ENCODE measurements at regions of chr1 and their contacts with region 1.

Region 1: DNA sequence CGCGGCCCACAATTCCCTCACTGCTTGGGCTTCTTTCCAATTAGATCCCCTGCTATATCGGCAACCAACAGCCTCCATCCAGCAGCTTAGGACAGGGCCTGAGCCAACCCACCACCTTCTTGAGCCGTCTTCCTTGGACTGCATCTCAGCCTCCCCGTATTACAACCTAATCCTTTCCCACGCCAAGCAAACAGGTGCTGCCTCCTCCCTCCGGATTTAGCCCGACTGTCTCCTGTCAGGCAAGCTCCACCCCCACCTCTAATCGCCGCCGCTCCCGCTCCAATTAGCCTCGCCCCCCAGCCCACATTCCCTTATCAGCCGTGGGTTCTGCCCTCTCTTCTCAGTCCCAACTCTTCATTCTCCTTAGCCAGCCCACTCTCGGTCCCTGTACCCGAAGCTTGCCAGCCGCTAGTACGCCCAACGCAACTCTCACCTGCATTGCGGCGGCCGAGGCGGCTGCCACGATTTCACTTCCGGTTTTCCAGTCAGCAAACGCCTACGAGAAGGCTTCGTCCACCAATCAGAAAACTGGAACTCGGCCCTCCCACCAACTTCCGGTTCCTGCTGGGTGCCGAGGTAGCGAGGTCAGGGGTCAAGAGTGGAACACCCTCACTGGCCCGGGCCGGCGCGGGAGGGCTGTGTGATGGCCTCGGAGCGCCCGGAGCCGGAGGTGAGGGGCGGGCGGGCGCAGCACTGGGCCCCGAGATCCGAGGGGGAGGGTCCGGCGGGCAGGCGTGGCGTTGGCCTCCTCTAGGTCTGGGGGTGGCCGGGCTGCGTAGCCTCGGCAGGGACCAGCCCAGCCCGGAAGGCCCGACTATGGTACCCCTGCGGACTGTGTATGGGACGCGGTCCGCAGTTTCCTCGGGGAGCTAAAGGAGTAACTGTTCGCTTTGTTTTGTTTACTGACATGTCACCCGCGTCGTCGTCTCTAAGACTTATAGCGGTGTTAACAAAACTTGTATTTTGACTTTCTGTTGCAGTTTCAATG is at the starts of genes MED8 and SZT2:
- DNase-seq: peak; percentile 98 to 99 (median 98)
- ATAC-seq: peak; percentile 98
- H3K4me3 ChIP-seq: peak within 1 kb of the TSS; percentile 61
- H3K27ac ChIP-seq: peak within 1 kb of the TSS; percentile 85
- H3K4me1 ChIP-seq: peaks cover 0 to 13% of the 10 kb centered on the region in 2 experiments; a peak in 2 of 5 replicates
- H3K27me3 ChIP-seq: no peaks in the 10 kb centered on the region
- CTCF ChIP-seq: no peak
- EP300 ChIP-seq: peak; percentile 24
- POLR2A ChIP-seq: peak; percentile 99
- RAD21 ChIP-seq: no peak; a peak in 1 of 4 replicates
- polyA plus RNA-seq, gene MED8: 104 to 120 TPM
- polyA plus RNA-seq, gene SZT2: 0.88 to 1.3 TPM

Region 2: DNA sequence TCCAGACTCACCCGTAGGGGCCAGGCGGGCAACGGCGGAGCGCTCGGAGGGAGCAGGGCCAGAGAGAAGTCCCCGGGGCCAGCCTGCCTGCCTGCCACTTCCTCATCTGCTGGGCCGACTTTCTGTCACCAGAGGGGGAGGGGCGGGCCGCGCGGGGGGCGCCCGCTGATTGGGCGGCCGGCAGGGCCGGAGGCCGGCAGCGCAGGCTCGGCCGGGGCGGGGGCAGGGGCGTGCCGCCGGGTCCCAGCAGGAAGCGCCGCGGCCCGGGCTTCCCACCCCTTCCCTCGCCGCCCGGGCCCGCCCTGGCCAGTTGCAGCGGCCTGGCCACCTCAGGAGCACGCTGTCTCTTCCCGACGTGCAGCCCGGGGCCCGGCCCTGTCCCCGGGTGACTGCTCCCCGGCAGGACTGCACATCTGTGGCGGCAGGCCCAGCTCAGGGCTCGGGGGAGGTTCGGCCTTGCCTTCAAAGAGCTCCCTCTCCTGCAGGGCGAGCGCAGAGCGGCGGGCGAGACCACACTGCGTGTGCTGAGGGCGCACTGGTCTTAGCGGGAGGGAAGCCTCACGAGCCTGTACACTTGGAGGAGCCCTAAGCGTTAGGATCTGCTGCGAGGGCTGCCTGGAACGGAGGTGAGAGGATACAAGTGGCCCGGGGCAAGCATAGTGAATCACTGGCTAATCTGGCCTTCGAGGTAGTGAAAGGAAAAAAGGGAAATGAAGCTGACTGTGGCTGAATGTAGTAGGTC is 21.5 kb before region 1 on chr1 and contains the start of gene ELOVL1:
- CTCF ChIA-PET with region 1: no interaction called
- POLR2A ChIA-PET with region 1: interaction called, 72 read pairs
- in situ Hi-C with region 1: no loop called
- intact Hi-C with region 1: no loop called
- DNase-seq: peak; percentile 97 to 99 (median 98)
- ATAC-seq: peak; percentile 90
- H3K4me3 ChIP-seq: peak within 1 kb of the TSS; percentile 64
- H3K27ac ChIP-seq: peak within 1 kb of the TSS; percentile 89
- H3K4me1 ChIP-seq: peaks cover 35 to 41% of the 10 kb centered on the region in 2 experiments
- H3K27me3 ChIP-seq: no peaks in the 10 kb centered on the region
- CTCF ChIP-seq: peak; percentile 57 to 65 (median 60); a peak in 5 of 6 replicates
- EP300 ChIP-seq: peak; percentile 24; the same call in 1 of the 2 replicates
- POLR2A ChIP-seq: peak; percentile 92
- RAD21 ChIP-seq: peak; percentile 51 to 64
- polyA plus RNA-seq, gene ELOVL1: 70.3 to 147 TPM

Region 3: GRCh38 chr1:43373066-43373940 is 16.3 kb before region 1 on chr1:
- CTCF ChIA-PET with region 1: no interaction called
- POLR2A ChIA-PET with region 1: interaction called, 72 read pairs
- in situ Hi-C with region 1: no loop called
- intact Hi-C with region 1: no loop called
- DNase-seq: no peak
- ATAC-seq: no peak
- H3K4me3 ChIP-seq: no peak overlapping the region
- H3K27ac ChIP-seq: no peak overlapping the region; the same call in 2 of the 3 replicates
- H3K4me1 ChIP-seq: peaks cover 7 to 22% of the 10 kb centered on the region in 2 experiments
- H3K27me3 ChIP-seq: no peaks in the 10 kb centered on the region
- CTCF ChIP-seq: no peak
- EP300 ChIP-seq: no peak
- POLR2A ChIP-seq: no peak
- RAD21 ChIP-seq: no peak

Region 4: DNA sequence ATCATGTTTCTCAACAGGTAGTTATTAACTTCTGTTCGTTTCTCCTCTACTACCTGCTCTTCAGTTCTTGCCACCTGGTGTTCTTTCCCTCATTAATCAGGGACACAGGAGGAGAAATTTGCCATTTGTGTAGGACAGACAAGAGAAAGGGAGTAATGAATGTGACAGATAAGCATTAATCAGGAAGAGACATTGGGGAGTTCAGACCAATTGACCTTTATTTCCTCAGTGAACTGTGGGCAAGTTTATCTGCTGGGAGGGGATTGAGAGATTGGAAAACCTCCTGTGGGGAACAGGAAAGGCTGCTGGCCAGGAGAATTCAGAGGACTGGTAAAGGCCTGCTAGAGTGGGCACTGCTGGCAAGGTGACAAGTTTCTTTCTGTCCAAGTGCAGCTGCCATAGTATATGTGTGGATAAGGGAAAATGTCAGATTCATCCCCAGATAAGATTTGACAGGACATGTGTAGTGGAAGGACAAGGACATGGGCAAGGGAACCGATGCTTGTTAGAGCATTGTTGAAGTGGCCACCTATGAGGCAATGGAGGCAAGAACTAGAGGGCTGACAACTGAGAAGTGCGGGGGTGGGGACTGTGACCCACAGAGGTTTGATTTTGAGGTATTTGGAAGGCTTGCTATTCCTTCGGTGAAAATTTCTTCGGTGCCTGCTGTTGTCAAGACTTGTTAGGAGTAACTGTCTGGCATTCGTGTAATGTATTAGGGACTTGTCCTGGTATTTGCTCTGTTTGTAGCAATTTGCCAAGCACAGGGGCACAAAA is 12.7 kb after region 1 on chr1:
- CTCF ChIA-PET with region 1: no interaction called
- POLR2A ChIA-PET with region 1: interaction called, 28 read pairs
- in situ Hi-C with region 1: no loop called
- intact Hi-C with region 1: no loop called
- DNase-seq: peak in 3 of 4 experiments; percentile 19 to 54 (median 28)
- ATAC-seq: no peak
- H3K4me3 ChIP-seq: no peak overlapping the region
- H3K27ac ChIP-seq: no peak overlapping the region
- H3K4me1 ChIP-seq: peaks cover 11 to 22% of the 10 kb centered on the region in 2 experiments; a peak in 4 of 5 replicates
- H3K27me3 ChIP-seq: no peaks in the 10 kb centered on the region
- CTCF ChIP-seq: no peak
- EP300 ChIP-seq: peak; percentile 61; the same call in 1 of the 2 replicates
- POLR2A ChIP-seq: no peak
- RAD21 ChIP-seq: no peak

Region 5: GRCh38 chr1:43473463-43473862 is 83.8 kb after region 1 on chr1:
- CTCF ChIA-PET with region 1: no interaction called
- POLR2A ChIA-PET with region 1: no interaction called
- in situ Hi-C with region 1: no loop called
- intact Hi-C with region 1: no loop called
- DNase-seq: no peak
- ATAC-seq: no peak
- H3K4me3 ChIP-seq: no peak overlapping the region
- H3K27ac ChIP-seq: no peak overlapping the region
- H3K4me1 ChIP-seq: no peaks in the 10 kb centered on the region
- H3K27me3 ChIP-seq: peaks cover 23 to 35% of the 10 kb centered on the region in 2 experiments
- CTCF ChIP-seq: no peak
- EP300 ChIP-seq: no peak
- POLR2A ChIP-seq: no peak
- RAD21 ChIP-seq: no peak